ENCODE measurements at regions of chr12 and their contacts with region 1.

Region 1: GRCh38 chr12:71636704-71637115 is 26.9 kb downstream of the ZFC3H1 start:
- DNase-seq: no peak
- H3K4me3 ChIP-seq: no peak overlapping the region
- H3K27ac ChIP-seq: peak overlapping the region in 7 of 59 donors; percentile 7 to 47 (median 18)
- H3K27me3 ChIP-seq: no peaks in the 10 kb centered on the region
- CTCF ChIP-seq: peak; percentile 48 to 91 (median 76)

Region 2: DNA sequence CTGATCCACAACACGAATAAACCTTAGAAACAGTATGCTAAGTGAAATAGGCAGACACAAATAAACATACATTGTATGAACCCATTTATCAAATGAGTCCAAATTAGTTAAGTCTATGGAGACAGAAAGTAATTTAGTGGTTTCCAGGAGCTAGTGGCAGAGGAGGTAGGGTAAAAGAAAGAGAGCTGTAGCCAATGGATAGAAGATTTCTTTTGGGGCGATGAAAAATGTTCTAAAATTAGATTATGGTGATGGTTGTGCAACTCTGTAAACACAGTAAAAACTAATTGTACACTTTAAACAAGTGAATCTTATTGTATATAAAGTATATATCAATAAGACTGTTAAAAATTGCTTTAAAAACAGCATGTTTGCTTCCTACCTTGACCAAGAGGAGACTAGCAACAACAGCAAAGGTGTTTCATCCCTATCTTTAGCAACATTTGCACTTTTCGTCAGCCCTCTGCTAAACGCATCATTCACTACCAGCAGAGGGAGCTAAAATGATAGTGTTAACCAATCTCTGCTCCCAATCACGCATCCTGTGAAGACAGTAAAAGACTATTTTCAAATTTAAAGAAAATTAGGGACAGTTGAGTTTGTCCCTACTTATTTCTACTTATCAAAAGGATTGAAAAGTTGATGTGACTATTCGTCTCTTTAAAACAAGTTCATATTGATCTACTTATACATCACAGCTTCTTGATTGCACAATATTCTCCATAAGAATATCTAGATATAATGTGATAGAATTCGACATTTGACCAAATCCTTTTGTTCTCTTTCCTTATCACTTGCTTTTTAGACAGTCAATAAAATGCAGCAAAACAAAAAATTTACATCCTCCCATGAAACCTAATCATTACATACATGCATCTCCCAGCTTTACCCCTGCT is 221.1 kb before region 1 on chr12:
- intact Hi-C with region 1: loop called (anchors 2 to 10 kb)
- DNase-seq: peak in 1 of 10 donors; percentile 17
- H3K4me3 ChIP-seq: no peak overlapping the region
- H3K27ac ChIP-seq: no peak overlapping the region
- H3K27me3 ChIP-seq: peaks cover 0 to 3% (median 0%) of the 10 kb centered on the region in 45 donors
- CTCF ChIP-seq: peak; percentile 60 to 98 (median 85)

Region 3: GRCh38 chr12:71981149-71981548 is 344.4 kb after region 1 on chr12:
- intact Hi-C with region 1: no loop called
- DNase-seq: no peak
- H3K4me3 ChIP-seq: no peak overlapping the region
- H3K27ac ChIP-seq: no peak overlapping the region
- H3K27me3 ChIP-seq: no peaks in the 10 kb centered on the region
- CTCF ChIP-seq: no peak